Activated CD4-positive, alpha-beta T cell treated with anti-CD3 and anti-CD28 coated beads for 36 hours (primary cell): ENCODE measurements at regions of chr14 and their contacts with region 1.

Region 1: GRCh38 chr14:58376791-58377190 is 18.9 kb upstream of the TOMM20L start:
- DNase-seq: no peak
- ATAC-seq: no peak
- H3K4me3 Mint-ChIP-seq: no peak overlapping the region
- H3K27ac Mint-ChIP-seq: no peak overlapping the region
- H3K4me1 Mint-ChIP-seq: no peaks in the 10 kb centered on the region
- H3K27me3 Mint-ChIP-seq: no peaks in the 10 kb centered on the region

Region 2: DNA sequence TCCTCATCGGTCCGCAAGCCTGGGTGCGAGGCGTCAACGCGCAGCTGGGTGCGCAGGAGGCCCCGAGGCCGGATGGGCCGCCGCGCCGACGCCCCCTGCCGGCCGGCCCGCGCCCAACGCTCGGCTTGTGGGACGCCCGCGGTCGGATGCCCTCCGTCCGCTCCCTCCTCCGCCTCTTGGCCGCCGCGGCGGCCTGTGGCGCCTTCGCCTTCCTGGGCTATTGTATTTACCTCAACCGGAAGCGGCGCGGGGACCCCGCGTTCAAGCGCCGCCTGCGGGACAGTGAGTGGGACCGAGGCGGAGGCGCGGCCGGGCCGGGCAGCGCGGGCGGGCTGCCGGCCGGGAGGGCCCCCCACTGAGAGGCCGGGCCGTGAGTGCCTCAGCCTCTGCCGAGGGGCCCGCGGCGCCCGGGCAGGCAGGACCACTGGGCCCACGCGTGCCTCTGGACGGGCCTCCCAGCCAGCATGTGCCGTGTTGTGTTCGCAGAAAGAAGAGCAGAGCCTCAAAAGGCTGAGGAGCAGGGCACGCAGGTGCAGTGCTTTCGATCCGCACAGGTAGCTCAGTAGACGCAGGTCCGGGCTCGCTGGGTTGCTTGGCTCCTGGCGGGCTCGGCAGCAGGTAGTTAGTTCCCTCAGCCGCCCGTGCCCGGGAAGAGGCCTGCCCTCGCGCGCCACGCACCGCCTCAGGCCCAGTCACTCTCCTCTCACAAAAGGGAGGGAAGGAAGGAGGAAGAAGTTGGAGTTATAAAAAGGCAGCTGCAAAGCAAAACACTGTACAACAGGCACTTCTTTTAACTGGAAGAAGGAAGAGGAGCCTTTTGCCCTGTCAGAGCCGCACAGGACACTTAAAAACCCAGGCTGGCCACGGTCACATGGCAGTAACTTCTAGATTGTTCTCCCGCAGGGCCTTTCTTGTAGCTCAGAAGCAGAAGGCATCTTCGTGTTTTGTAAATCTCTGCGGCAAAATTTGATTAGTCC is 19.3 kb after region 1 on chr14 and contains the start of gene TOMM20L:
- CTCF ChIA-PET with region 1: interaction called, 12 read pairs
- POLR2A ChIA-PET with region 1: no interaction called
- intact Hi-C with region 1: no loop called
- DNase-seq: peak; percentile 82
- ATAC-seq: peak; percentile 92
- H3K4me3 Mint-ChIP-seq: peak within 1 kb of the TSS; percentile 60
- H3K27ac Mint-ChIP-seq: peak within 1 kb of the TSS; percentile 70
- H3K4me1 Mint-ChIP-seq: peaks cover 12% of the 10 kb centered on the region
- H3K27me3 Mint-ChIP-seq: no peaks in the 10 kb centered on the region
- total RNA-seq, gene TOMM20L: not detected